ENCODE measurements at regions of chr10 and their contacts with region 1.

Region 1: DNA sequence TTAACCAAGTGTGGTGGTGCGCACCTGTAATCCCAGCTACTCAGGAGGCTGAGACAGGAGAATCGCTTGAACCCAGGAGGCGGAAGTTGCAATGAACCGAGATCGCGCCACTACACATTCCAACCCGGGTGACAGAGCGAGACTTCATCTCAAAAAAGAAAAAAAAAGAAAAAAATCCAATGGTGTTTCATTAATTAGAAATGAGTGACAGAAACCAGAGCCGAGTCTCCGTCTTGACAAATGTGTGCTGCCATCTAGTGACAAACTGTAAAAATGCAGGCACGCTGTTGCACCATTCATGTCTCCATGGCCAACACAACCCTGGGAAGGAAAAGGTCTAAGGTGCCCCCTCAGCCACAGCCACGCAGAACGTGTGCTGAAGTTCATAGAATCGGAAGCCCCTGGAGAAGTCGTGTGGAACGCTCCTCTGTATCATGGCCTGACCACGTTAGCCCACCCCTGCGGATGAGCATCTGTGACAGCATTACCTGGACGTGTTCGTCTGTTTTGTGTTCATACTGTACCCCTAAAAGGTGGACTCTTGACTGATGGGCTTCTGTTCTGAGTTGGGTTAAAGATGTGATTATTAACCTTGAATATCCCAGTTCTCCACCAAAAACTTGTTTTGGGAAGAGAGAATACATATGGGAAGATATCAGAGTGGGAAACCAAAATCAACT is 94.9 kb downstream of the LYZL2 start:
- DNase-seq: peak; percentile 82 to 83
- H3K4me3 ChIP-seq: no peak overlapping the region
- H3K27ac ChIP-seq: no peak overlapping the region
- H3K4me1 ChIP-seq: no peaks in the 10 kb centered on the region
- H3K27me3 ChIP-seq: no peaks in the 10 kb centered on the region
- CTCF ChIP-seq: peak; percentile 91 to 92

Region 2: GRCh38 chr10:30392564-30392990 is 142.0 kb before region 1 on chr10:
- intact Hi-C with region 1: loop called (anchors 5 kb)
- DNase-seq: peak; percentile 63 to 80
- H3K4me3 ChIP-seq: no peak overlapping the region
- H3K27ac ChIP-seq: no peak overlapping the region
- H3K4me1 ChIP-seq: peaks cover 0 to 5% (median 2%) of the 10 kb centered on the region in 4 donors
- H3K27me3 ChIP-seq: no peaks in the 10 kb centered on the region
- CTCF ChIP-seq: peak; percentile 89 to 97

Region 3: DNA sequence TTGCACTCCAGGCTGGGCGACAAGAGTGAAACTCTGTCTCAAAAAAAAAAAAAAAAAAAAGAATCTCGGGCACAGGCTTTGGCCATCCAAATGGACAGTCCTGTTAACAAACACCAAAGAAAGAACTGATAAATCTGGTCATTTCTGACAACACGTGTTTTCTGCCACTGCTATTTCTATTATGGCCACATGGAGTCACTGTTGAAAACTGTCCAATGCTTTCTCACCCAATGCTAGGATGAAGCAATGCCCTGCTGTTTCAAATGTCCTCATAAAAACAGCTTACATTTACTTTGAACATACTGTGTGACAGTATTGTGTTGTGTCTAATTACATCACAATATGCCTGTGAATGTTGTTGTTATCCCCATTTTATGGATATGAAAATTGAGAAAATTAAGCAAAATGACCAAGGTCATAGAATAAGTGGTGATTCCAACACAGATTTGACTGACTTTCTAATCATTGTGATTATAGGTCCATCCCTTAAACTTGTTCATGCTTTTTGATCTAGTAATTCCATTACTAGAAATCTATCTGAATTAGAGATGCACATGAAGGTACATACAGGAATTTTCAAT is 120.5 kb before region 1 on chr10:
- intact Hi-C with region 1: loop called (anchors 5 kb)
- DNase-seq: no peak
- H3K4me3 ChIP-seq: no peak overlapping the region
- H3K27ac ChIP-seq: no peak overlapping the region
- H3K4me1 ChIP-seq: peaks cover 0 to 10% (median 3%) of the 10 kb centered on the region in 4 donors
- H3K27me3 ChIP-seq: no peaks in the 10 kb centered on the region
- CTCF ChIP-seq: peak; percentile 86 to 95

Region 4: DNA sequence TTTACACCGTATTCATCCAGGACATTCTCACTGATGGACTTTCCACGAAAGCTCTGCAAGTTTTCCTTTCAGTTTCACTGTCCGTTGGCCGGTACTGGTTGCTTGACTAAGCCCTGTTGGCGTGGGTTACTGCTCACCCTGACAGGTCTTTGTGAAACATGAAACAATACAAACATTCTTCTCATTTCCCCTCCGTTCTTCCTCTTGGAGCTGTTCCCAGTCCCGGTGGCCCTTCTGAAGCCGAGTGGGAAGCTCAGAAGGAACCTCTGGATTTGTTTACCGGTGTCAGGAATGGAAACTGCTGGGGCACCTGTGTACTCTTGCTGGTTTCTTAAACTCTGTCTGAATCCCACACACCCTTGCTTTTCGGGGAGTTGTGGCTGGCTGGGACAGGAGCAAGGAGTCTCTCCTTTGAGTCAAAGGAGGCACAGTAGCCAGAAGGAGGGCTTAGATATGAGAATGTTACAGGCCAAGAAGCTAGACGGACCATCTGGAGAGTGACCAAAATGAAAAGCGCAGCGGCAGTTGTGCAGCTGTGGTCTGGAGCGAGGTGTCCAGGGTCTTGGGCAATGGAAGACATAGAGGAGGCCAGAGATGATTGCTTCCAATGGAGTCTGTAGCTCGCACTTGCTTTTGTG is 49.3 kb after region 1 on chr10:
- intact Hi-C with region 1: no loop called
- DNase-seq: peak; percentile 70 to 74
- H3K4me3 ChIP-seq: peak overlapping the region; percentile 40 to 47
- H3K27ac ChIP-seq: peak overlapping the region; percentile 45 to 60
- H3K4me1 ChIP-seq: peaks cover 0 to 15% (median 3%) of the 10 kb centered on the region in 4 donors
- H3K27me3 ChIP-seq: no peaks in the 10 kb centered on the region
- CTCF ChIP-seq: no peak

Region 5: GRCh38 chr10:30803892-30804322 is 269.3 kb after region 1 on chr10:
- intact Hi-C with region 1: no loop called
- DNase-seq: peak; percentile 83 to 84
- H3K4me3 ChIP-seq: no peak overlapping the region
- H3K27ac ChIP-seq: peak overlapping the region; percentile 30 to 40
- H3K4me1 ChIP-seq: peaks cover 0 to 14% (median 3%) of the 10 kb centered on the region in 4 donors
- H3K27me3 ChIP-seq: no peaks in the 10 kb centered on the region
- CTCF ChIP-seq: no peak